ENCODE measurements at regions of chr6 and their contacts with region 1.

Region 1: GRCh38 chr6:149335924-149336608 is 18.6 kb downstream of the TAB2 start:
- DNase-seq: peak; percentile 90
- H3K4me3 Mint-ChIP-seq: peak overlapping the region; percentile 36
- H3K27ac Mint-ChIP-seq: peak overlapping the region; percentile 89
- H3K4me1 Mint-ChIP-seq: peaks cover 63% of the 10 kb centered on the region
- H3K27me3 Mint-ChIP-seq: no peaks in the 10 kb centered on the region
- CTCF ChIP-seq: no peak

Region 2: GRCh38 chr6:149014631-149015534 is 321.2 kb before region 1 on chr6:
- CTCF ChIA-PET with region 1: no interaction called
- POLR2A ChIA-PET with region 1: no interaction called
- intact Hi-C with region 1: no loop called
- DNase-seq: no peak
- H3K4me3 Mint-ChIP-seq: no peak overlapping the region
- H3K27ac Mint-ChIP-seq: no peak overlapping the region
- H3K4me1 Mint-ChIP-seq: peaks cover 17% of the 10 kb centered on the region
- H3K27me3 Mint-ChIP-seq: no peaks in the 10 kb centered on the region
- CTCF ChIP-seq: no peak

Region 3: GRCh38 chr6:149075616-149076364 is 260.3 kb before region 1 on chr6:
- CTCF ChIA-PET with region 1: interaction called, 4 read pairs
- POLR2A ChIA-PET with region 1: interaction called, 17 read pairs
- intact Hi-C with region 1: no loop called
- DNase-seq: peak; percentile 39
- H3K4me3 Mint-ChIP-seq: peak overlapping the region; percentile 10
- H3K27ac Mint-ChIP-seq: peak overlapping the region; percentile 70
- H3K4me1 Mint-ChIP-seq: peaks cover 22% of the 10 kb centered on the region
- H3K27me3 Mint-ChIP-seq: no peaks in the 10 kb centered on the region
- CTCF ChIP-seq: no peak

Region 4: DNA sequence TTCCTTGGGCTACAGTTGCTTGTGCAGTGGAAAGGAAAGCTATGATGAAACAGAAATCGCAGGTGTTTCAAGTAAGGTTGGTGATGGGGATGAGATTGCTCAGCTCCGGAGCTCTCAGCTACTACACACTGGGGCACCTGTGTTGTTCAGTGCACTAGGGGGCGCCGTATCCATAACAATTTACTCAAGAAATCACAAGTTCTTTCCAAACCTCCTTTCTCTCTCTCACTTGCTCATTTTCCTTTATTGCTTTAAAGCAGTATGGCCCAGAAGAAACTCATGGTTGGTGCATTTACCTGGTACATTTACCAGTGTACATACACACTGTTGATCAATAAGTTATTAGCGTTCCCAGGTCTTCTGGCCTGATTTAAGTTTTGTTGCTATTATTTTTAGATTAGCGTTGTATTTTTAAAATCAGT is 253.8 kb before region 1 on chr6:
- CTCF ChIA-PET with region 1: interaction called, 4 read pairs
- POLR2A ChIA-PET with region 1: interaction called, 17 read pairs
- intact Hi-C with region 1: no loop called
- DNase-seq: peak; percentile 78
- H3K4me3 Mint-ChIP-seq: no peak overlapping the region
- H3K27ac Mint-ChIP-seq: no peak overlapping the region
- H3K4me1 Mint-ChIP-seq: peaks cover 11% of the 10 kb centered on the region
- H3K27me3 Mint-ChIP-seq: no peaks in the 10 kb centered on the region
- CTCF ChIP-seq: peak; percentile 72

Region 5: DNA sequence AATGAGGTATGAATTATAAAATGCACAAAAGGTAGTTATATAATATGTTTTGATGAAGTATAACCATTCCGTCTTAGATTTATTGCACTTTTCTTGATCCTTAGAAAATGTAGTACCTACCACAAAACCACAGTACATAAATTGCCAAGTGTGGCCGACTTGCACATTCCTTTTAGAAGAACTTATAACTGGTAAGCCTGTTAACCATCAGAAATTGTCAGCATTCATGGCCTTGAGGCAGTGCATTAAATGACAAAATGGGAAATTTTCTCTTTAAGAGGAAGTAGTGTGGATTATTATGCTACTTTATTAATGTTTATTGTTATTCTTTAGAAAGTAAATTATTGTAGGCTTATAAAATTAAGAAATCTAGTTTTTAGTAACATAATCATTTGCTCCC is 11.0 kb after region 1 on chr6:
- CTCF ChIA-PET with region 1: interaction called, 6 read pairs
- POLR2A ChIA-PET with region 1: interaction called, 61 read pairs
- intact Hi-C with region 1: no loop called
- DNase-seq: no peak
- H3K4me3 Mint-ChIP-seq: no peak overlapping the region
- H3K27ac Mint-ChIP-seq: no peak overlapping the region
- H3K4me1 Mint-ChIP-seq: peaks cover 29% of the 10 kb centered on the region
- H3K27me3 Mint-ChIP-seq: no peaks in the 10 kb centered on the region
- CTCF ChIP-seq: no peak

Region 6: DNA sequence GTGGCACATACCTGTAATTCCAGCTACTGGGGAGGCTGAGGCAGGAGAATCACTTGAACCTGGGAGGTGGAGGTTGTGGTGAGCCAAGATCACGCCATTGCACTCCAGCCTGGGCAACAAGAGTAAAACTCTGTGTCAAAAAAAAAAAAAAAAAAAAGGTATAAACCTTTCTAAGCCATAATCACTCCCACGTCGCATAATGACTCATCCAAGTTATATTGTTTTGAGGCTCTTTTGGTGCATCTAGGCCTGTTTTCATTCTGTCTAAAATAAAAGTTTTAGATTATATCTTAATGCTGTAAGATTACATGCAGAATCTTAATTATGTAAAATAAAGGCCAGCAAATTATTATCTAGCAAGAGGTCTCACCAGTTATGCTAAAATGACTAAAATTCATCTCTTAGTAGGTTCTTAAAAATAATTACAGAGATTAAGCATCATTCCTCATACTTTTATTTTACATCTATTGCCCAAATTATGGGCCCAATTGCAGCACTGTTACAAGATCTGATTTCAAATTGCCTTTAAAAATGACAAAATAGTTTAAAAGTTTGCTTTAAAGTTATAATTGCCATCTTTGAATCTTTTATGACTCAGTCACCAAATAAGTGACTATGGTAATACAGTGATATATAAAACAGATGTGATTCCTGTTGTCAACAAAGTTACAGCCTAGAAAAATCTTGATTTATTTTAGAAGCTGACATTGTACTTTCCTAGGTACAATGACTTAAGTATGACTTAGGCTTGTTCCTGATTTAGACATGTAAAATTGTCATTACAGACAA is 53.6 kb after region 1 on chr6:
- CTCF ChIA-PET with region 1: no interaction called
- POLR2A ChIA-PET with region 1: interaction called, 17 read pairs
- intact Hi-C with region 1: no loop called
- DNase-seq: no peak
- H3K4me3 Mint-ChIP-seq: no peak overlapping the region
- H3K27ac Mint-ChIP-seq: no peak overlapping the region
- H3K4me1 Mint-ChIP-seq: peaks cover 24% of the 10 kb centered on the region
- H3K27me3 Mint-ChIP-seq: no peaks in the 10 kb centered on the region
- CTCF ChIP-seq: no peak

Region 7: GRCh38 chr6:149468179-149468578 is 132.1 kb after region 1 on chr6:
- CTCF ChIA-PET with region 1: no interaction called
- POLR2A ChIA-PET with region 1: no interaction called
- intact Hi-C with region 1: no loop called
- DNase-seq: no peak
- H3K4me3 Mint-ChIP-seq: no peak overlapping the region
- H3K27ac Mint-ChIP-seq: no peak overlapping the region
- H3K4me1 Mint-ChIP-seq: no peaks in the 10 kb centered on the region
- H3K27me3 Mint-ChIP-seq: no peaks in the 10 kb centered on the region
- CTCF ChIP-seq: no peak

Measured in MCF 10A (cell line).